HepG2 (cell line): ENCODE measurements at regions of chr3 and their contacts with region 1.

Region 1: DNA sequence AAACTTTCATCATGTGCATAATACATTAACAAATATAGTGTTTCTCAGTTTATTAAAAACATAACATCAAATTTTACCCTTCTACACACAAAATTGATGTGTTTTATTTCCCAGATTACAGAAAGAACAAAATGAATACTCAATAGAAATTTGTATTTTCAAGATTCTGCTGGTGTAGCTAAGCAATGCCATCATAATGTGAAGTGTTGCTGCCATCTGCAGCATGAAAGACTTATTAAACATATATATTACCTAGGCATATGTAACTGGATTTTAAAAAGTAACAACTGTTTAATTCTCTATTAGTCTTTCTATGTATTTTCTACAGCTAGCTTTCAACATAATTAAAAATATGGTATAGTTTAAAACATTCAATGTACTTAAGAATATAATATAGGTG is 27.5 kb downstream of the PLSCR5 start:
- DNase-seq: peak; percentile 39
- ATAC-seq: no peak
- H3K4me3 ChIP-seq: no peak overlapping the region
- H3K27ac ChIP-seq: no peak overlapping the region
- H3K4me1 ChIP-seq: peaks cover 31% of the 10 kb centered on the region
- H3K27me3 ChIP-seq: no peaks in the 10 kb centered on the region
- CTCF ChIP-seq: peak; percentile 59
- EP300 ChIP-seq: no peak
- POLR2A ChIP-seq: no peak
- RAD21 ChIP-seq: no peak

Region 2: DNA sequence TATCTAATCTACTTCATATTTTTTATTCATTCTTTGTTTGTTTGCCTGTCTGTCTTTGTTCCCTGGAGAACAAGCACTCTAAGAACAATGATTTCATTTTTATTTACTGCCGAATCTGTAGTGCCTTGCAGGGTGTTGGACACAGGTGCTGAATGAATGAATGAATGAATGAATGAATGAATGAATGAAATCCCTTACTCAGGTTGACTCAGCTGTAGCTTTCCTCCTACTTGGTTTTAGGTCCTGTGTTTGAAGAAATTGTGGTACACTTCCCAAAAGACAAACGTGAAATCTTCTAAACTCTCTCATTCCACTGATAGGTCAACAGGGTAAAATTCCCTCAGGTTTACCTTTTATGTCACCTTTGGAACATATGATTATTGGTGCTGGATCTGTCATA is 586.5 kb before region 1 on chr3:
- CTCF ChIA-PET with region 1: no interaction called
- POLR2A ChIA-PET with region 1: no interaction called
- in situ Hi-C with region 1: no loop called
- intact Hi-C with region 1: no loop called
- DNase-seq: no peak
- ATAC-seq: no peak
- H3K4me3 ChIP-seq: no peak overlapping the region
- H3K27ac ChIP-seq: no peak overlapping the region
- H3K4me1 ChIP-seq: no peaks in the 10 kb centered on the region
- H3K27me3 ChIP-seq: no peaks in the 10 kb centered on the region
- CTCF ChIP-seq: no peak
- EP300 ChIP-seq: no peak
- POLR2A ChIP-seq: no peak
- RAD21 ChIP-seq: no peak

Region 3: DNA sequence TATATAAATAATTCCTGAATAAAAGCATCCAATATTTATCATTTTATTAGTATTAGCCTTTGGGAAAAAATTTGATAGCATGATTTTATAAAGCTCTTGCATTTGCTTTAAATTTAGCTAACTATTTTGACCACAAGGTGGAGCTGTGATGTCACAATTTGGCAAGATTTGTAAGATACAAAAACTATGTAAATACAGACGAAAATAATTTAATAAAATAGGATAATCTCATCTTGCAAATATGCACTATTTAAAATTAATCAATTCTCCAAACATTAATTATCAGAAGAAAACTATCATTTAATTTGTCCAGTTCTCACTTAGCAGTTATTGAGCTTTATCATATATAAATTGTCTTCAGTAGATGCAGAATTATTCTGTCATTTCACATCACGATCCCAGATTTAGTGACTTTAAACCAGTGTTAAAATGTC is 512.1 kb before region 1 on chr3:
- CTCF ChIA-PET with region 1: interaction called, 3 read pairs
- POLR2A ChIA-PET with region 1: no interaction called
- in situ Hi-C with region 1: loop called (anchors 10 kb)
- intact Hi-C with region 1: loop called (anchors 5 kb)
- DNase-seq: peak; percentile 50
- ATAC-seq: no peak
- H3K4me3 ChIP-seq: no peak overlapping the region
- H3K27ac ChIP-seq: no peak overlapping the region
- H3K4me1 ChIP-seq: no peaks in the 10 kb centered on the region
- H3K27me3 ChIP-seq: no peaks in the 10 kb centered on the region; a peak in 1 of 5 replicates
- CTCF ChIP-seq: peak; percentile 49
- EP300 ChIP-seq: no peak
- POLR2A ChIP-seq: no peak
- RAD21 ChIP-seq: no peak

Region 4: GRCh38 chr3:146218880-146219866 is 358.5 kb before region 1 on chr3:
- CTCF ChIA-PET with region 1: interaction called, 6 read pairs
- POLR2A ChIA-PET with region 1: interaction called, 9 read pairs
- in situ Hi-C with region 1: loop called (anchors 5 kb)
- intact Hi-C with region 1: loop called (anchors 1 kb)
- DNase-seq: peak; percentile 6
- ATAC-seq: no peak
- H3K4me3 ChIP-seq: no peak overlapping the region; a peak in 2 of 6 replicates
- H3K27ac ChIP-seq: no peak overlapping the region
- H3K4me1 ChIP-seq: peaks cover 45% of the 10 kb centered on the region
- H3K27me3 ChIP-seq: no peaks in the 10 kb centered on the region
- CTCF ChIP-seq: peak; percentile 54
- EP300 ChIP-seq: no peak
- POLR2A ChIP-seq: no peak
- RAD21 ChIP-seq: no peak; the same call in 1 of the 2 replicates

Region 5: GRCh38 chr3:146334151-146334550 is 243.5 kb before region 1 on chr3:
- CTCF ChIA-PET with region 1: no interaction called
- POLR2A ChIA-PET with region 1: no interaction called
- in situ Hi-C with region 1: loop called (anchors 10 kb)
- intact Hi-C with region 1: no loop called
- DNase-seq: no peak
- ATAC-seq: no peak
- H3K4me3 ChIP-seq: no peak overlapping the region
- H3K27ac ChIP-seq: no peak overlapping the region
- H3K4me1 ChIP-seq: no peaks in the 10 kb centered on the region
- H3K27me3 ChIP-seq: no peaks in the 10 kb centered on the region; a peak in 1 of 5 replicates
- CTCF ChIP-seq: no peak
- EP300 ChIP-seq: no peak
- POLR2A ChIP-seq: no peak
- RAD21 ChIP-seq: no peak

Region 6: GRCh38 chr3:146544002-146544928 is 33.4 kb before region 1 on chr3 and contains the start of gene PLSCR1:
- CTCF ChIA-PET with region 1: no interaction called
- POLR2A ChIA-PET with region 1: interaction called, 14 read pairs
- in situ Hi-C with region 1: no loop called
- intact Hi-C with region 1: loop called (anchors 5 kb)
- DNase-seq: peak; percentile 81
- ATAC-seq: peak; percentile 92
- H3K4me3 ChIP-seq: peak within 1 kb of the TSS; percentile 89 to 93 (median 91)
- H3K27ac ChIP-seq: peak within 1 kb of the TSS; percentile 88
- H3K4me1 ChIP-seq: peaks cover 70% of the 10 kb centered on the region
- H3K27me3 ChIP-seq: no peaks in the 10 kb centered on the region
- CTCF ChIP-seq: 0 out of 2 replicates have a peak, but pooled peaks have one; percentile 11
- EP300 ChIP-seq: no peak
- POLR2A ChIP-seq: peak; percentile 72 to 75
- RAD21 ChIP-seq: no peak
- total RNA-seq, gene PLSCR1: 34.1 and 44.3 TPM in 2 replicates

Region 7: GRCh38 chr3:147153830-147154539 is 576.3 kb after region 1 on chr3:
- CTCF ChIA-PET with region 1: no interaction called
- POLR2A ChIA-PET with region 1: no interaction called
- in situ Hi-C with region 1: no loop called
- intact Hi-C with region 1: no loop called
- DNase-seq: no peak
- ATAC-seq: no peak
- H3K4me3 ChIP-seq: no peak overlapping the region
- H3K27ac ChIP-seq: no peak overlapping the region
- H3K4me1 ChIP-seq: no peaks in the 10 kb centered on the region
- H3K27me3 ChIP-seq: no peaks in the 10 kb centered on the region
- CTCF ChIP-seq: no peak
- EP300 ChIP-seq: no peak
- POLR2A ChIP-seq: no peak
- RAD21 ChIP-seq: no peak